ENCODE measurements at regions of chr6 and their contacts with region 1.

Region 1: GRCh38 chr6:53718597-53719460 is 53.3 kb upstream of the KLHL31 start:
- DNase-seq: peak; percentile 74
- H3K4me3 ChIP-seq: no peak overlapping the region
- H3K27ac ChIP-seq: no peak overlapping the region
- H3K4me1 ChIP-seq: no peaks in the 10 kb centered on the region
- H3K27me3 ChIP-seq: peaks cover 2 to 15% of the 10 kb centered on the region in 2 experiments
- CTCF ChIP-seq: peak; percentile 69 to 78
- POLR2A ChIP-seq: no peak

Region 2: GRCh38 chr6:53651764-53652401 is 66.9 kb before region 1 on chr6:
- CTCF ChIA-PET with region 1: interaction called, 17 read pairs
- POLR2A ChIA-PET with region 1: no interaction called
- dilution Hi-C with region 1: no loop called
- intact Hi-C with region 1: no loop called
- DNase-seq: peak; percentile 64
- H3K4me3 ChIP-seq: peak overlapping the region in 2 of 3 experiments; percentile 42 to 48
- H3K27ac ChIP-seq: no peak overlapping the region
- H3K4me1 ChIP-seq: peaks cover 5% of the 10 kb centered on the region
- H3K27me3 ChIP-seq: peaks cover 9 to 10% of the 10 kb centered on the region in 2 experiments
- CTCF ChIP-seq: peak in 1 of 2 donors; percentile 48
- POLR2A ChIP-seq: no peak

Region 3: DNA sequence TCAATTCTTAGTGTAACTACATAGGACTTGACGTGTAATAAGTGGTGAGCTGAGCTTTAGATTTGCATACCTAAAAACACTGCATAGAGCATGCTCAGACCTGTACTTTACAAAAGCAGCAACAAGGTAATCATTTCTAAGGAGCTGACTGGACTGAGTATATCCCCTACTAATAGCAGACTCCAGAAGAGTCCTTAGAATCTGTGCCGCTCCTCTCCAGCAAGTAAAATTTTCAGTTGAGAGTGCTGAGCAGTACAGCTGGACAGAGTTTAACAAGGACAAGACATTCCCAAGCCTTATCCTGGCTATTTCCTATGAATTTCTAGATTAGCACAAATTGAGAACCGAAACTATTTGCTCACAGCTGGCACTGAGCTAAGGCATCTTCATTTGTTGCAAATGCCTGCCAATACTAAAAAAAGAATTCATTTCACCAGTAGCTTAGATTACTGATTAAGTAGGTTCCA is 27.1 kb before region 1 on chr6:
- CTCF ChIA-PET with region 1: interaction called, 12 read pairs
- POLR2A ChIA-PET with region 1: no interaction called
- dilution Hi-C with region 1: no loop called
- intact Hi-C with region 1: no loop called
- DNase-seq: no peak
- H3K4me3 ChIP-seq: no peak overlapping the region
- H3K27ac ChIP-seq: no peak overlapping the region
- H3K4me1 ChIP-seq: no peaks in the 10 kb centered on the region
- H3K27me3 ChIP-seq: no peaks in the 10 kb centered on the region
- CTCF ChIP-seq: no peak
- POLR2A ChIP-seq: no peak

Region 4: GRCh38 chr6:53707108-53707897 is 11.5 kb before region 1 on chr6:
- CTCF ChIA-PET with region 1: interaction called, 30 read pairs
- POLR2A ChIA-PET with region 1: interaction called, 3 read pairs
- dilution Hi-C with region 1: no loop called
- intact Hi-C with region 1: no loop called
- DNase-seq: no peak
- H3K4me3 ChIP-seq: no peak overlapping the region
- H3K27ac ChIP-seq: no peak overlapping the region
- H3K4me1 ChIP-seq: no peaks in the 10 kb centered on the region
- H3K27me3 ChIP-seq: no peaks in the 10 kb centered on the region
- CTCF ChIP-seq: no peak
- POLR2A ChIP-seq: no peak

Region 5: DNA sequence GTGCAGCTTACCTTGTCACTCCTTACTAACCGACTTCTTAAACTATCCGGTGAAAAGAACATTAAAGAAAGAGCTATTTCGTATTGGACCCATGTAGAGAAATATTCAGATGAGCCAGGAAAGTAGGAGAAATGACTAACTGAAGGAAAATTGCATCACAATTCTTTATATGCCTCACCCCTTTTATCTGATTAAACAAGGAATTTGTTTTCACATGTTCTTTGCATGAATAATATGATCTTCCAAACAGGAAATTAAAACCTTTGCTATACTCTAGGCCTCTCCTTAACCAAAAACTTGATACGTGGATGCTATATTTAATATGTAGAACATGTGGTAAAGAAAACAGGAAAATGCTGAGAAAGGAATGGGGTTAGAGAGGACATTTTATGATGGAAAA is 34.0 kb after region 1 on chr6:
- CTCF ChIA-PET with region 1: interaction called, 10 read pairs
- POLR2A ChIA-PET with region 1: no interaction called
- dilution Hi-C with region 1: no loop called
- intact Hi-C with region 1: no loop called
- DNase-seq: peak; percentile 50
- H3K4me3 ChIP-seq: no peak overlapping the region
- H3K27ac ChIP-seq: peak overlapping the region; percentile 75
- H3K4me1 ChIP-seq: peaks cover 15% of the 10 kb centered on the region
- H3K27me3 ChIP-seq: no peaks in the 10 kb centered on the region
- CTCF ChIP-seq: no peak
- POLR2A ChIP-seq: no peak

Region 6: DNA sequence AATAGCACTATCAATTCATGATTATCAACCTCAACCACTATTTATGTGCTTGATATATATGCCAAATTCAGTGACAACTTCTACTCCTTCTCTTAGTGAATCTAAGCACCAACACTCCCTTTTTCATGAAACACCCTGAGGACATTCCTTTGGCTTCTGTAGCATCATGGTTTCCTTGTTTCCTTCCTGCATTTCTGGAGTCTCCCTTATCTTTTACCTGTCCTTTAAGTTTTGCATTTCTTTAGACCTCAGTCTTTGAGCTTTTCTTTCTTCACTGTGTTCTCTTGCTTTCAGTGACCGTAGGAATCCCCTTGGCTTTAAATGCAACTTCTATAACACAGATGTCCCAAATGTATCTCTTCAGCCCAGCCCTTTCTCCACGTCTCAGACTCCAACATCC is 248.6 kb after region 1 on chr6:
- CTCF ChIA-PET with region 1: interaction called, 10 read pairs
- POLR2A ChIA-PET with region 1: no interaction called
- dilution Hi-C with region 1: no loop called
- intact Hi-C with region 1: no loop called
- DNase-seq: no peak
- H3K4me3 ChIP-seq: no peak overlapping the region
- H3K27ac ChIP-seq: no peak overlapping the region
- H3K4me1 ChIP-seq: no peaks in the 10 kb centered on the region
- H3K27me3 ChIP-seq: no peaks in the 10 kb centered on the region
- CTCF ChIP-seq: no peak
- POLR2A ChIP-seq: no peak

Measured in endothelial cell of umbilical vein (primary cell).